ENCODE measurements at regions of chr20 and their contacts with region 1.

Region 1: GRCh38 chr20:43537921-43538877 is 20.6 kb upstream of the SGK2 start:
- DNase-seq: peak; percentile 24
- H3K4me3 ChIP-seq: no peak overlapping the region
- H3K27ac ChIP-seq: no peak overlapping the region
- H3K27me3 ChIP-seq: no peaks in the 10 kb centered on the region
- CTCF ChIP-seq: peak; percentile 92

Region 2: DNA sequence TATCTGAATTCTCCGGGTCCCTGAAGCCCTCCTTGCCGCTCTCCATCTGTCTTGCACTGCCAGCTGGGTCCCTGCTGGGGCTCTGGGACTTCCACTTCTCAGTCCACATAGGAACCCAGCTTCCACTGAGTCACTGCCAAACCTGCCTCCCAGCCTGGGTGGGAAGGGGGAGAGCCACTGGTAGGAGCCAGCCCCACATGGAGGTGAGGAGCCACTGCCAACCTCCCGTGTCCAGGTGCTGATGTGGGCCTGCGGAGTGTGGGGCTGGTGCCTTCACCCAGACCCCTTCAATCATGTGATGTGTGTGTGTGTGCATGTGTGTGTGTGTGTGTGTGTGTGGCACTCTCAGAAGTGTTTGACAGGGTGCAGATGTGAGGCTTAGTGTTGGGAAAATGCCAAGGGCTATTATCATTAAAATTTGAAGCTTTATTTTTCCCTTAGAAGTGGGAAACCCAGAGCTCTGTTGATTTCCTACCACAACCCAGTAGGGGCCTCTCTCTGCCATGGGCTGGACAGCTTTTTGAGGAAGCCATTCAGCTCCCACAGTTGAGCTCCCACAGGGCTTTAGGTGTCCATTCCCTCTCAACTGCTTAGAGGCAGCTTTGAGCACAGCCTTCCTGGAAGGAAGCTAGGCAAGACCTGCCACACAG is 11.3 kb after region 1 on chr20:
- CTCF ChIA-PET with region 1: interaction called, 14 read pairs
- POLR2A ChIA-PET with region 1: no interaction called
- DNase-seq: no peak
- H3K4me3 ChIP-seq: no peak overlapping the region
- H3K27ac ChIP-seq: no peak overlapping the region
- H3K27me3 ChIP-seq: no peaks in the 10 kb centered on the region
- CTCF ChIP-seq: no peak

Region 3: DNA sequence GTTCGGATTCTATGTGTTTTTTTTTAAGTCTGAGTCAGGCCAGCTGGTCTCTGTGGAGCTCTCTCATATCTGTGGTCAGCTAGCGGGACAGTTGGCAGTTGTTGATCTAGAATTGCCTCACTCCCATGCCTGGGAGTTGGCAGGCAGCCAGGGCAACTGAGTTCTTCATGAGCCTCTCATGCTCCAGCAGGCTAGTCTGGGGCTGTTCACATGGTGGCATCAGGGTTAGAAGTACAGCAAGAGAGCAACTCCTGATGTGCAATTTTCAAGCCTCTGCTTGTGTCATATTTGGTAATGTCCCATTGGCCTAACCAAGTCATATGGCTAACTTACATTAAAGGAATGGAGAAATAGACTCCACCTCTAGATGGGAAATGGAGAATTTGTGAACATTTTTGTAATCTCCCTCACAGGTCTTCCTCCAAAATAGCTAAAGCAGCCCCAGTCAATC is 45.8 kb after region 1 on chr20:
- CTCF ChIA-PET with region 1: interaction called, 35 read pairs
- POLR2A ChIA-PET with region 1: interaction called, 11 read pairs
- DNase-seq: peak; percentile 92
- H3K4me3 ChIP-seq: no peak overlapping the region
- H3K27ac ChIP-seq: peak overlapping the region; percentile 78
- H3K27me3 ChIP-seq: peaks cover 10% of the 10 kb centered on the region
- CTCF ChIP-seq: no peak

Region 4: GRCh38 chr20:43590392-43591323 is 52.5 kb after region 1 on chr20 and contains the start of gene IFT52:
- CTCF ChIA-PET with region 1: interaction called, 35 read pairs
- POLR2A ChIA-PET with region 1: interaction called, 7 read pairs
- DNase-seq: peak; percentile 69
- H3K4me3 ChIP-seq: peak within 1 kb of the TSS; percentile 93
- H3K27ac ChIP-seq: peak within 1 kb of the TSS; percentile 57
- H3K27me3 ChIP-seq: no peaks in the 10 kb centered on the region
- CTCF ChIP-seq: 0 out of 2 replicates have a peak, but pooled peaks have one; percentile 0
- polyA plus RNA-seq, gene IFT52: 47.7 and 53.2 TPM in 2 replicates

Region 5: DNA sequence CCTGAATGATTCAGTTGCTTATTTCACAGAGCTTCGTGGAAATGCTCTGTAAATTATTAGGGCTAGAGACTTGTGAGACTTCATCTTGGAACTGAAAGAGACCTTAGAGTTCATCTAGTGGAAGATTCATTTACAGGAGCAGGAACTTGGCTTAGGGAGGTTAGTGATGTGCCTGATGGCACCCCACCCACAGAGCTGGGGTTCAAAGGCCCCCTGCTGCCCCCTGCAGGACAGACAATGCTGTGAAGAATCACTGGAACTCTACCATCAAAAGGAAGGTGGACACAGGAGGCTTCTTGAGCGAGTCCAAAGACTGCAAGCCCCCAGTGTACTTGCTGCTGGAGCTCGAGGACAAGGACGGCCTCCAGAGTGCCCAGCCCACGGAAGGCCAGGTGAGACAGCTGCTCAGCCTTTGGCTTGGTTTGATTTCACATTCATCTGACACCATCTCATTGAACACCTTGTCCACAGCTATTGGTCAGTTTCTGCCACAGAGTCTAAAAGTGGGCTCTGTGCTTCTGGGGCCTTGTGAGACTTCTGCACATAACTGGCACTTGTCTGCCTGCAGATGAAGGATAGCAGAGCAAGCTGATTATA is 153.8 kb after region 1 on chr20:
- CTCF ChIA-PET with region 1: interaction called, 23 read pairs
- POLR2A ChIA-PET with region 1: no interaction called
- DNase-seq: no peak
- H3K4me3 ChIP-seq: no peak overlapping the region
- H3K27ac ChIP-seq: no peak overlapping the region
- H3K27me3 ChIP-seq: no peaks in the 10 kb centered on the region
- CTCF ChIP-seq: peak; percentile 63

Region 6: GRCh38 chr20:43749734-43750294 is 211.6 kb after region 1 on chr20:
- CTCF ChIA-PET with region 1: interaction called, 13 read pairs
- POLR2A ChIA-PET with region 1: no interaction called
- DNase-seq: no peak
- H3K4me3 ChIP-seq: no peak overlapping the region
- H3K27ac ChIP-seq: no peak overlapping the region
- H3K27me3 ChIP-seq: no peaks in the 10 kb centered on the region
- CTCF ChIP-seq: peak; percentile 98

Region 7: DNA sequence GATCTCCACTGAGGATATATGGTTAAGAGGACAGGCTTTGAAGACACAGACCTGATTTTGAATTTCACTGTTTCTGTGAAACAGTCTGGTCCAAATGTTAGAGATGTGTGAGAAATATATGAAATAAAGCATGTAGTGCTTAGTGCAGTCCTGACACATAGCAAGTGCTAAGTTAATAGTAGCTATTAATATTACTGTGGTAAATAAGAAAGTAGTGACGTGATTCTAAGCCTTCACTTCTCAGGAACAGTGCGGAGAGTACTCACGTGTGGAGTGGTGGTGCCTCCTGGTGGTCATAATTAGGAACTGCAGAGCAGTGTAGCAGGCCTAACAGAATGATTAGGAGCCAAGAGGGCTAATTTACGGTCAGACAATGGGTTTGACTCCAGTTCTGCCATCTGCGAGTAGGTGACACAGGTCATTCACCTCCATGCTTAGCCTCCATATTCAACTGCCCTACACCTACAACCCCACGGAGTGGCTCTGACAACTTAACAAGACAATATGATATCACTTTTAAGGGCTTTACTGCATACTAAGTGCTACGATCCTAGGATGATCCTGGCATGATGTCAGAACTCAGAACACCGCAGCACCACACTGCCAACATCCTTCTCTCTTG is 542.6 kb after region 1 on chr20:
- CTCF ChIA-PET with region 1: interaction called, 18 read pairs
- POLR2A ChIA-PET with region 1: no interaction called
- DNase-seq: peak; percentile 61
- H3K4me3 ChIP-seq: no peak overlapping the region
- H3K27ac ChIP-seq: peak overlapping the region; percentile 42
- H3K27me3 ChIP-seq: no peaks in the 10 kb centered on the region
- CTCF ChIP-seq: peak; percentile 98